ENCODE measurements at regions of chr3 and their contacts with region 1.

Region 1: GRCh38 chr3:24237971-24238767 is 256.5 kb downstream of the THRB start:
- DNase-seq: peak; percentile 21 to 47
- ATAC-seq: peak; percentile 97

Region 2: GRCh38 chr3:23888617-23889228 is 349.4 kb before region 1 on chr3:
- intact Hi-C with region 1: loop called in 1 of 2 experiments (anchors 10 kb)
- DNase-seq: no peak
- ATAC-seq: peak; percentile 48

Region 3: DNA sequence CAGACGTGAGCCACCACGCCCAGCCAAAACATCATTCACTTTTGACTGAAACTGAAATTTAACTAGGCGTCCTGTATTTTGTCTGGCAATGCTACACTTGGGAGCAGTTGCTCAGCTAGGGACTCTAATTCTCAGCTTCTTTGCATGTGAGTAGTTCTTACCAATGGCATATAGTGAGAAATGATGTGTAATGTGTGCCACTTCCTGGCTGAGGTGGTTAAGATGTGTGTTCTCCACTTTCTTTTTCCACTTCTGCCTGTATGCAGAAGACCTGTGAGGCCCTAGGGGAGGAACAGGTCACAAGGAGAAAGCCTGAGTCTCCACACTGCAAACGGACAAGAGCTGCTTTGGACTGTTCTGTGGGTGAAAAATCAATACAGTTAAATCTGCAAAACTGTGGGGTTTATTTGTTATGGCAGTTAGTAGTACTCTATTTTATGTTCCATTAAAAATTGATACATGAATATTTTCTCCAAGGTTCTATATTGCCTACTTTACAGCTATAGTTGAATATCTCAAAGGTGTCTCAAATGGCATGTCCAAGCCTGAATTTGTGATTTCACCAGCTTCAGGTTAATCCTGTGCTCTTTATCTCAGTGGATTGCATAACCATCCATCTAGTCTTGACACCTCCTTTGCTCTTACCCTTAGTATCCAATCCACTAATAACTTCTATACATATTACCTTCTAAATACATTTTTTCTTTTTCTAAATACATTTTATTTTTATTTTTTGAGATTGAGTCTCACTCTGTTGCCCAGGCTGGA is 233.8 kb before region 1 on chr3:
- intact Hi-C with region 1: loop called in 1 of 2 experiments (anchors 5 kb)
- DNase-seq: no peak
- ATAC-seq: no peak

Region 4: GRCh38 chr3:24137958-24138875 is 100.0 kb before region 1 on chr3:
- intact Hi-C with region 1: no loop called
- DNase-seq: peak in 1 of 2 donors; percentile 9
- ATAC-seq: peak; percentile 45

Region 5: DNA sequence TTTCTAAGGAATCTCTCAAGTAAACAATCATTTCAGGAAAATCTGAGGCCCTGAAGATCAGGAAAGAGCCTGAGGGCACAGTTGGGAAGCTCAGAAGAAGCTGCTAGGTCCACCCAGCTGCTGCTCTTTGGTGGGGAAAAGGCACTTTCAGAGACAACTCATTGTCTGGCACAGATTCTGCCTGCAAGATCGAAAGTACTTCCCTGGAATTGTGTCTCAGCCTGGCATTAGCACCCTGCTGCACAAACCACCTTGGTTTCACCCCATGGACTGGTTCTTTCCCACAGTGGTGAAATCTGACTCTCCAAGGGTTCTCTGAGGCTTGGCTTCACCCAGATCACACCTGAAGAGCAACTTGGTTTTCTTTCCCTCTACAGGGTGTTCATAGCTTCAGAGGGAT is 237.8 kb after region 1 on chr3:
- intact Hi-C with region 1: no loop called
- DNase-seq: no peak
- ATAC-seq: no peak

Measured in left colon (tissue), 2 donors.